ENCODE measurements at regions of chr19 and their contacts with region 1.

Region 1: GRCh38 chr19:13718733-13719132 is 45.6 kb upstream of the MRI1 start:
- DNase-seq: peak; percentile 36
- ATAC-seq: peak; percentile 55
- H3K4me3 Mint-ChIP-seq: no peak overlapping the region
- H3K27ac Mint-ChIP-seq: no peak overlapping the region
- H3K4me1 Mint-ChIP-seq: no peaks in the 10 kb centered on the region
- H3K27me3 Mint-ChIP-seq: peaks cover 4% of the 10 kb centered on the region; the same call in 1 of the 2 replicates
- CTCF ChIP-seq: no peak

Region 2: GRCh38 chr19:13574933-13575332 is 143.8 kb before region 1 on chr19:
- CTCF ChIA-PET with region 1: interaction called, 12 read pairs
- POLR2A ChIA-PET with region 1: no interaction called
- DNase-seq: peak; percentile 47
- ATAC-seq: peak; percentile 53; the same call in 1 of the 2 replicates
- H3K4me3 Mint-ChIP-seq: no peak overlapping the region
- H3K27ac Mint-ChIP-seq: no peak overlapping the region
- H3K4me1 Mint-ChIP-seq: peaks cover 3% of the 10 kb centered on the region; the same call in 1 of the 2 replicates
- H3K27me3 Mint-ChIP-seq: peaks cover 10% of the 10 kb centered on the region
- CTCF ChIP-seq: no peak

Region 3: GRCh38 chr19:13597640-13598039 is 121.1 kb before region 1 on chr19:
- CTCF ChIA-PET with region 1: interaction called, 69 read pairs
- POLR2A ChIA-PET with region 1: no interaction called
- DNase-seq: peak; percentile 56
- ATAC-seq: peak; percentile 84
- H3K4me3 Mint-ChIP-seq: no peak overlapping the region
- H3K27ac Mint-ChIP-seq: no peak overlapping the region
- H3K4me1 Mint-ChIP-seq: peaks cover 5% of the 10 kb centered on the region; the same call in 1 of the 2 replicates
- H3K27me3 Mint-ChIP-seq: peaks cover 4% of the 10 kb centered on the region; the same call in 1 of the 2 replicates
- CTCF ChIP-seq: 0 out of 2 replicates have a peak, but pooled peaks have one; percentile 33

Region 4: GRCh38 chr19:13610039-13610691 is 108.6 kb before region 1 on chr19:
- CTCF ChIA-PET with region 1: interaction called, 16 read pairs
- POLR2A ChIA-PET with region 1: no interaction called
- DNase-seq: peak; percentile 40
- ATAC-seq: peak; percentile 39
- H3K4me3 Mint-ChIP-seq: no peak overlapping the region
- H3K27ac Mint-ChIP-seq: 0 out of 2 replicates have a peak overlapping the region, but pooled peaks have one; percentile 53
- H3K4me1 Mint-ChIP-seq: peaks cover 12% of the 10 kb centered on the region
- H3K27me3 Mint-ChIP-seq: no peaks in the 10 kb centered on the region
- CTCF ChIP-seq: no peak

Region 5: DNA sequence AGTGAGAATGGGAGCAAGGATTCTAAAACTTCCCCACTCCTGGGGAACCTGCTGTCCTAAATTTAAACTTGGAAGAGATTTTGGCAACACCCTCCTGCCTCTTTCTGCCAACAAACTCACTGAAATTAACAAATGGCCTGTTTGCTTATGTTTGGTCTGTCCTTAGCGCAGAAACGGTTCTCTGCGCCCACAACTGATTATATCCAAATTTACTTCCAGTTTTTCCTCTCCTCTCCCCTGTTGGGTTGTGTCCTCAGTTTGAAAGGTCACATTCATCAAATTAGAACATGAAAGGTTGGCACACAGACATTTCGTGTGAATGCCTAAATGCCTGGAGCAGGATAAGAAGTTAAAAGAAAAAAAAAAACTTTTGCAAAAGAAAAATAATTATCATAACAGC is 10.8 kb before region 1 on chr19:
- CTCF ChIA-PET with region 1: interaction called, 11 read pairs
- POLR2A ChIA-PET with region 1: no interaction called
- DNase-seq: no peak
- ATAC-seq: no peak
- H3K4me3 Mint-ChIP-seq: no peak overlapping the region
- H3K27ac Mint-ChIP-seq: no peak overlapping the region
- H3K4me1 Mint-ChIP-seq: no peaks in the 10 kb centered on the region
- H3K27me3 Mint-ChIP-seq: peaks cover 9% of the 10 kb centered on the region
- CTCF ChIP-seq: no peak

Region 6: DNA sequence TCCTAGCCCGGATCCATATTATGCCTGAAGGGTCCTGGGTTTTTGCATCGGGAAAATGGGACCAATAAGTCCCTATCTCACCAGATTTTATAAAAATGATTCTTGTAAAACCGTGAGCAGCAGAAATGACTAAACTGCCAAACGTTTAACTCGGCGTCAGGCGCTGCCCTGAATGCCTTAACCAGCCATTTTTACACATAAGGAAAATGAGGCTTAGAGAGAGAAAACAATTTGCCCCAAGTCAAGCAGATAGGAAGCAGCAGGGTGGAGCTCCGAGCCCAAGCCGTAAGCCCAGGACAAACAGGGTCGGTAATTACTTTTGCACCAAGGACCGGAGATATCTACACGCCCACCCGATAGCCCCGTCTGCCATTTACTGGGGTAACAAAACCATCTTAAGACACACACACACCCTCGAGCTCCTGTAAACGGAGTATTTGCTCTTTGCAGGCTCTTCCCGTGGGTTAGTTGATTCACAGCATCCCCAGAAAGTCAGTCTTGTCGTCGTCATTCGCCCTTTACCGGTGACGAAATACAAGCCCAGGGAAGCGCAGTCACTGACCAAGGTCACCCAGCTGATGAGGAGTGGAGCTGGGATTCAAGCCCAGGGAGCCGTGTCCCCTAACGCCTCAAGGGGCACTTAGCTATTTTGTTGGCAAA is 29.6 kb after region 1 on chr19:
- CTCF ChIA-PET with region 1: interaction called, 20 read pairs
- POLR2A ChIA-PET with region 1: no interaction called
- DNase-seq: no peak
- ATAC-seq: no peak
- H3K4me3 Mint-ChIP-seq: peak overlapping the region; percentile 96
- H3K27ac Mint-ChIP-seq: peak overlapping the region; percentile 92
- H3K4me1 Mint-ChIP-seq: peaks cover 9% of the 10 kb centered on the region
- H3K27me3 Mint-ChIP-seq: no peaks in the 10 kb centered on the region; the same call in 1 of the 2 replicates
- CTCF ChIP-seq: no peak

Measured in WTC11 (cell line).